Calu3 (cell line): ENCODE measurements at regions of chr9 and their contacts with region 1.

Region 1: DNA sequence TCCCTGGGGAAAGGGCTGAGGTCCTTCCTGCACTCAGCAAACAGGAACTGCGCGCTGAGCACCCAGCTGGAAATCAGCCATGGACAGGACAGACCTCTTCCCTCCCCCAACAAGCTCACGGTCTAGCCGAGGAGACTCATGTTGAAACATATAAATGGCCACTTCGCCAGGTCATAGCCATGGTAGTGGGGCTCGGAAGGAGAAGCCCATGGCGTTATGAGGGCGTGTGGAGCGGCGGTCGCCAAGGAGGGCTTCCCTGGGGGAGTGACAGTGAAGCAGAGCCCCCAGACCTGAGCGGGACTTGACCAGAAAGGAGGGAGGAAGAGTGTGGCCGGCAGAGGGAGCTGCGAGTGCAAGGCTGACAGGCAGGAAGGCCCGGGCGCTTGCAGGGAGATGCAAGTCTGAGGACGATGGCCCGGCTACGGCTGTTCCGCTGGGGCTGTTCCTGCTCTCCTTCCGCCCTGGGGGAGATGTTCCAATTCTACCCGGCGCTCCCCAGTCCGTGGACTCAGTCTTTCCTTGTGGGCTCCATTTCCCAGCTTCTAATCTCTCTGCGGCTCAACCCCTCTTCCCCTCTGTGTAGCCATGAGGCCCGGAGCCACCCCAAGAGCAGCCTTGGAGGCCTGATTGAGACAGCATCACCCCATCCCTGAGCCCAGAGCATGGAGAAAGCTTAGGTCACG is 43.9 kb upstream of the PRRC2B start:
- DNase-seq: peak; percentile 88
- H3K4me3 Mint-ChIP-seq: peak overlapping the region; percentile 70
- H3K27ac Mint-ChIP-seq: no peak overlapping the region
- H3K4me1 Mint-ChIP-seq: no peaks in the 10 kb centered on the region
- H3K27me3 Mint-ChIP-seq: no peaks in the 10 kb centered on the region
- CTCF ChIP-seq: peak; percentile 50

Region 2: GRCh38 chr9:131370638-131371037 is 20.6 kb after region 1 on chr9:
- CTCF ChIA-PET with region 1: interaction called, 12 read pairs
- intact Hi-C with region 1: no loop called
- DNase-seq: no peak
- H3K4me3 Mint-ChIP-seq: no peak overlapping the region
- H3K27ac Mint-ChIP-seq: no peak overlapping the region
- H3K4me1 Mint-ChIP-seq: peaks cover 14% of the 10 kb centered on the region
- H3K27me3 Mint-ChIP-seq: no peaks in the 10 kb centered on the region
- CTCF ChIP-seq: no peak

Region 3: DNA sequence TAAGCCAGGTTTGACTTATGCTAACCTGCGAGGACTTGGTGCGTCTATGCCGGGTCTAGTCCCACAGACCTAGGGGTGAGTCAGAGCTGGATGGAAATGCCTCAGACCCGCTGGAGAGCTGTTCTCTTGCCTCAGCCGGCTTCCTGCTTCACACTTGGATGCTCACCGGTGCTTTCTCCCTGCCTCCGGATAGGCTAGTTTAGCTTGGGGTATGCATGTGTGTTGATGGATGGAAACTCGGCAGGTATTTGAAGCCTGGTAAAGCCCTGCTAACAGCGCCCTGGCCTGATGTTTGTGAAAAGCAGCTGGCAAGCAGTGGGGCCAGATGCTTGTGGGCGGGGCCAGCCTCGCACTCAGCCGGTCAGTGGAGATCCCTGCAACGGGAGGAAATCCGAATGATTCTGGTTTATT is 73.2 kb after region 1 on chr9:
- CTCF ChIA-PET with region 1: interaction called, 6 read pairs
- intact Hi-C with region 1: loop called (anchors 2 kb)
- DNase-seq: peak; percentile 55
- H3K4me3 Mint-ChIP-seq: peak overlapping the region; percentile 46
- H3K27ac Mint-ChIP-seq: peak overlapping the region; percentile 47
- H3K4me1 Mint-ChIP-seq: peaks cover 48% of the 10 kb centered on the region
- H3K27me3 Mint-ChIP-seq: no peaks in the 10 kb centered on the region
- CTCF ChIP-seq: no peak

Region 4: DNA sequence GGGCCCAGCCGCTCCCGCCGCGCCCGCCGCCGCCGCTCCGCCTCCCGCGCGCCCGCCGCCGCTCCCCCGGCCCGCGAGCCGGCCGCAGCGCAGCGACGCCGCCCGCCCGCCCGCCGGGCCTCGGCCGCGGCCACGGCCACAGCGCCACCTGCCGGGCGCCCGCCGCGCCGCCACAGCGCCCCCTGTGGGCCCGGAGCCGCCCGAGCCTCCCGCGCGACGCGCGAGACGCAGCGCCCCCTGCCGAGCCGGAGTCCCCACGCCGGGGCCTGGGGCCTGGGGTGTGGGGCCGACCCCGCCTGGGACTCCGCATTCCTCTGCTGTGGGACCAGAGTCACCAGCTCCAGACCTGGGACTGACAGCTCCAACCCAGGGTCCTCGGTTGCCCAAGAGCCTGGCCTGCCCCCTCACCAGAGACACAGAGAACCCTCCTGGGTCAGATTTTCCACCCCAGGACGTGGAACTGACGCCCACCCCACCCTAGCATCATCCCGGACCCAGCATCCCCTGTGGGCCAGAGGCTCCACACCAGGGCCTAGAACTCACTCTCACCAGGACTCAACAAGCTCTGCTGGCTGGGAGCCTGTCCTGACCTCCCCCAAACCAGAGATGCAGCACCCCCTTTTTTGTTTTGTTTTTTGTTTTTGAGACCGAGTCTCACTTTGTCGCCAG is 390.1 kb after region 1 on chr9 and contains the start of gene RAPGEF1:
- CTCF ChIA-PET with region 1: no interaction called
- intact Hi-C with region 1: loop called (anchors 10 kb)
- DNase-seq: peak; percentile 79
- H3K4me3 Mint-ChIP-seq: peak within 1 kb of the TSS; percentile 78
- H3K27ac Mint-ChIP-seq: no peak within 1 kb of the TSS
- H3K4me1 Mint-ChIP-seq: peaks cover 38% of the 10 kb centered on the region
- H3K27me3 Mint-ChIP-seq: no peaks in the 10 kb centered on the region
- CTCF ChIP-seq: peak; percentile 82
- total RNA-seq, gene RAPGEF1: 32.5 and 33.4 TPM in 2 replicates